ENCODE measurements at regions of chr6 and their contacts with region 1.

Region 1: GRCh38 chr6:43774776-43775534 is 4.9 kb downstream of the VEGFA start:
- DNase-seq: peak; percentile 74 to 85 (median 79)
- ATAC-seq: peak; percentile 6 to 33 (median 20)
- H3K4me3 ChIP-seq: peak overlapping the region in 10 of 12 donors; percentile 64 to 99 (median 94)
- H3K27ac ChIP-seq: peak overlapping the region; percentile 89 to 99 (median 97)
- H3K4me1 ChIP-seq: peaks cover 8 to 81% (median 62%) of the 10 kb centered on the region in 12 donors
- H3K27me3 ChIP-seq: no peaks in the 10 kb centered on the region
- CTCF ChIP-seq: peak; percentile 71 to 89 (median 84)
- POLR2A ChIP-seq: peak in 1 of 2 donors; percentile 51

Region 2: GRCh38 chr6:43838276-43839036 is 63.5 kb after region 1 on chr6:
- intact Hi-C with region 1: loop called in 4 of 10 experiments (anchors 2 to 5 kb)
- DNase-seq: peak; percentile 17 to 76 (median 61)
- ATAC-seq: peak; percentile 39 to 87 (median 80)
- H3K4me3 ChIP-seq: no peak overlapping the region
- H3K27ac ChIP-seq: peak overlapping the region in 5 of 12 donors; percentile 14 to 63 (median 36)
- H3K4me1 ChIP-seq: peaks cover 0 to 19% (median 2%) of the 10 kb centered on the region in 12 donors
- H3K27me3 ChIP-seq: no peaks in the 10 kb centered on the region
- CTCF ChIP-seq: peak in 11 of 12 donors; percentile 36 to 65 (median 47)
- POLR2A ChIP-seq: no peak

Measured in heart left ventricle (tissue), 16 donors.